Activated naive CD4-positive, alpha-beta T cell treated with anti-CD3 and anti-CD28 coated beads for 36 hours (primary cell): ENCODE measurements at regions of chr13 and their contacts with region 1.

Region 1: GRCh38 chr13:47774671-47774994 is 226.4 kb downstream of the SUCLA2 start:
- DNase-seq: no peak
- H3K4me3 Mint-ChIP-seq: no peak overlapping the region
- H3K27ac Mint-ChIP-seq: no peak overlapping the region
- H3K4me1 Mint-ChIP-seq: no peaks in the 10 kb centered on the region
- H3K27me3 Mint-ChIP-seq: peaks cover 4% of the 10 kb centered on the region

Region 2: DNA sequence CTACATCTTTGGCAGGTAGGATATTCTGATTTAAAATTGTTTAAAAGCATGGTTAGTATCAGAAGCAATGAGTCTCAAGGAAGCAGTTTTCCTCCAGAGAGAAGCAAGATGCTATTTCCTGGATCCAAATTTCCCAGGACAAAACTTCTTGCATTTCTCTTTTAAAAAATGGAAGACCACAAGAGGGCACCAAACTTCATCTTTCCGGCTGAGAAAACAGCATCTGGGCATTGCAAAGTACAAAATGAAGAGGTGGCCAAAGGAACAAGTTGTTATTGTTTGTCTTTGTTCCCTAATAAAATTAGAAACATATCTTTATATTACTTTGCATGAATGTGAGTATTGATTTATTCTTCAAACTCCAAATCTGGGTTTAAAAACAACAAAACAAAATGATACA is 1281.7 kb before region 1 on chr13:
- CTCF ChIA-PET with region 1: no interaction called
- intact Hi-C with region 1: loop called (anchors 2 kb)
- DNase-seq: peak; percentile 11
- H3K4me3 Mint-ChIP-seq: no peak overlapping the region
- H3K27ac Mint-ChIP-seq: no peak overlapping the region
- H3K4me1 Mint-ChIP-seq: no peaks in the 10 kb centered on the region
- H3K27me3 Mint-ChIP-seq: no peaks in the 10 kb centered on the region

Region 3: GRCh38 chr13:46759846-46760245 is 1014.8 kb before region 1 on chr13:
- CTCF ChIA-PET with region 1: no interaction called
- intact Hi-C with region 1: loop called (anchors 10 kb)
- DNase-seq: no peak
- H3K4me3 Mint-ChIP-seq: no peak overlapping the region
- H3K27ac Mint-ChIP-seq: no peak overlapping the region
- H3K4me1 Mint-ChIP-seq: no peaks in the 10 kb centered on the region
- H3K27me3 Mint-ChIP-seq: no peaks in the 10 kb centered on the region

Region 4: GRCh38 chr13:46831588-46832194 is 942.9 kb before region 1 on chr13:
- CTCF ChIA-PET with region 1: no interaction called
- intact Hi-C with region 1: loop called (anchors 2 kb)
- DNase-seq: peak; percentile 63
- H3K4me3 Mint-ChIP-seq: no peak overlapping the region
- H3K27ac Mint-ChIP-seq: no peak overlapping the region
- H3K4me1 Mint-ChIP-seq: no peaks in the 10 kb centered on the region
- H3K27me3 Mint-ChIP-seq: no peaks in the 10 kb centered on the region

Region 5: GRCh38 chr13:46893798-46894560 is 880.7 kb before region 1 on chr13:
- CTCF ChIA-PET with region 1: interaction called, 4 read pairs
- intact Hi-C with region 1: loop called (anchors 1 kb)
- DNase-seq: peak; percentile 66
- H3K4me3 Mint-ChIP-seq: peak overlapping the region; percentile 53
- H3K27ac Mint-ChIP-seq: no peak overlapping the region
- H3K4me1 Mint-ChIP-seq: peaks cover 12% of the 10 kb centered on the region
- H3K27me3 Mint-ChIP-seq: peaks cover 55% of the 10 kb centered on the region

Region 6: DNA sequence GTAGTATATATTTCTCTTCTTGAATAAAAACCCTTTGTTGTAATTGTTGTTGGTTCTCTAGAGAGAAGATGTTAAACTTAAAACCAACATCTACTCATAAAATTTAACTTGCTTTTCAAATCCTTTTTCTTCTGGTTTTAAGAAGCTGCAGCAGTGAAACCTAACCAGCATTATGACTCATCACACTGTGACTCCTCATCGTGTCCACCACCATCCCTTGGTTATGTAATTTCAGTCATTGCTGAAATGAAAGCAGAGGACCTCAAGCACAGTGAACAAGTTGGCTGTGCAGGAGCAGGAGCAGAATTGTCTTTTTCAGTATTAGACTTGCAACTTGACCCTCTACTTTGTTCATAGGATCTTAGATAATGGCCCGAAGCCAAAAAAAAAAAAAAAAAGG is 812.9 kb before region 1 on chr13:
- CTCF ChIA-PET with region 1: no interaction called
- intact Hi-C with region 1: loop called (anchors 10 kb)
- DNase-seq: peak; percentile 8
- H3K4me3 Mint-ChIP-seq: no peak overlapping the region
- H3K27ac Mint-ChIP-seq: no peak overlapping the region
- H3K4me1 Mint-ChIP-seq: no peaks in the 10 kb centered on the region
- H3K27me3 Mint-ChIP-seq: no peaks in the 10 kb centered on the region

Region 7: DNA sequence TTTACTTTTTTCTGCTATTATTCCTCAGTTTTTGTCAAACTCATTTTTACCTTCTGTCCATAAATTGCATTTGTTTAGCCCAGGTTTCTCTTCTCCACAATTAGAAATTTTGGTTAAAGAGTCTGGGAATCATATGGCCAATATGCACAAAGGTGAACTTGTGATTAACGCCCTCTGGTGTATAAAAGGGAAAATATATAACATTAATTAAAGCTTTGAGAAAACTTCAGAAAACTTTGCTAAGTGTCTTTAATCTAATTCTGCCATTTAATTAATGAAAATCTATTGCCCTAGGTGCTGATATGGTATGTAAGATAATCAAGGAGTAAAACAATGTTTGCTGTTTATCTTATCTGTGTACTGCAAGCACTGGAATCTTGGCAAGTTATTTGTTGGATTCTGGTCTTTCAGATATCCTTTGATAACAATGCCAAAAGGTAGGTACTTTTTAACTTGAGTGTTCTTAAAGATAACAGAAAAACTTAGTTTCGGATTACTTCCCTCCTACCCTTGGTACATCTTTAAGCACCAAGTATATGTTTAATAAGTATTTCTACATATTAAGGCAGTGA is 176.2 kb before region 1 on chr13:
- CTCF ChIA-PET with region 1: interaction called, 3 read pairs
- intact Hi-C with region 1: loop called (anchors 5 kb)
- DNase-seq: no peak
- H3K4me3 Mint-ChIP-seq: no peak overlapping the region
- H3K27ac Mint-ChIP-seq: no peak overlapping the region
- H3K4me1 Mint-ChIP-seq: no peaks in the 10 kb centered on the region
- H3K27me3 Mint-ChIP-seq: peaks cover 3% of the 10 kb centered on the region

Region 8: GRCh38 chr13:48066310-48066989 is 291.8 kb after region 1 on chr13:
- CTCF ChIA-PET with region 1: no interaction called
- intact Hi-C with region 1: no loop called
- DNase-seq: peak; percentile 90
- H3K4me3 Mint-ChIP-seq: no peak overlapping the region
- H3K27ac Mint-ChIP-seq: peak overlapping the region; percentile 91
- H3K4me1 Mint-ChIP-seq: peaks cover 13% of the 10 kb centered on the region
- H3K27me3 Mint-ChIP-seq: no peaks in the 10 kb centered on the region